ENCODE measurements at regions of chr1 and their contacts with region 1.

Region 1: GRCh38 chr1:153566440-153567379 is 1.1 kb upstream of the S100A2 start:
- DNase-seq: peak; percentile 65
- ATAC-seq: peak; percentile 72
- H3K4me3 Mint-ChIP-seq: no peak overlapping the region
- H3K27ac Mint-ChIP-seq: peak overlapping the region; percentile 85
- H3K4me1 Mint-ChIP-seq: peaks cover 33% of the 10 kb centered on the region
- H3K27me3 Mint-ChIP-seq: no peaks in the 10 kb centered on the region
- CTCF ChIP-seq: no peak

Region 2: GRCh38 chr1:153545067-153546055 is 21.3 kb before region 1 on chr1 and contains the start of gene S100A4:
- CTCF ChIA-PET with region 1: interaction called, 188 read pairs
- POLR2A ChIA-PET with region 1: interaction called, 3 read pairs
- DNase-seq: peak; percentile 88
- ATAC-seq: peak; percentile 89
- H3K4me3 Mint-ChIP-seq: peak within 1 kb of the TSS; percentile 64
- H3K27ac Mint-ChIP-seq: peak within 1 kb of the TSS; percentile 96
- H3K4me1 Mint-ChIP-seq: peaks cover 65% of the 10 kb centered on the region
- H3K27me3 Mint-ChIP-seq: no peaks in the 10 kb centered on the region; the same call in 1 of the 2 replicates
- CTCF ChIP-seq: no peak
- total RNA-seq, gene S100A4: 22.7 to 32.0 TPM (median 31.7 TPM) in 3 replicates

Region 3: DNA sequence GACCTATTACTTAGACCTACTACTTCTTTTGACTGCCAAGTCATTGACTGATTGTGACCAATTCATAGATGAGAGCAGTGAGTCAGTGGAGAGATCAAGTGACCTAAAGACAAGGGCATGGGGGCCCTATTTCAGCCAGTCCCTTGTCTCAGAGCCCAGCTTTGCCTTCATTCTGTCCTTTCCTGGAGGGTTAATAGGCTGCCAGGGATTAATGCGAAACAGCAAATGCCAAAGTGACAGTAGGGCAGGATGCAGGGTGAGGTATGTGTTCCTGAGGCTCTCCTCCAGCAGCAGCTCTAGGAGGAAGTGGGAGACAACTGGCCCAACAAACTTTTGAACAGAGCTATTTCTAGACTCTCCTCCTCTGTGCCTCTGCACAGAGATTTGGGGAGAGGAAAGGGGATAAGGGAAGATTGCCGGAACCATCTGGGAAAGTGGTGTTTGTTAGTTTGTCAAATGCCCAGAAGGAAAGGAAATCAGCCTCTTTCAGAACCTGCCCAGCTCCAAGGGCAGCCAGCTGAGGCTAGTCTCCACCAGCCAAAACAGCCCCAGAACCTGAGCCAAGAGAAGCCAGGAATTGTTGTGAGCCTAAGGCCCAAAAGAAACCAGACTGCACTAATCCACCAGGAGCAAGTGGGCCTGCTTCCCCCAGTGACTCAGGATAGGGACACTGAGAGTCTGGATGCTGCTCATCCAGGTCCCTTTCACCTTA is 12.7 kb before region 1 on chr1:
- CTCF ChIA-PET with region 1: interaction called, 18 read pairs
- POLR2A ChIA-PET with region 1: interaction called, 3 read pairs
- DNase-seq: no peak
- ATAC-seq: no peak
- H3K4me3 Mint-ChIP-seq: no peak overlapping the region
- H3K27ac Mint-ChIP-seq: no peak overlapping the region
- H3K4me1 Mint-ChIP-seq: peaks cover 20% of the 10 kb centered on the region
- H3K27me3 Mint-ChIP-seq: no peaks in the 10 kb centered on the region; the same call in 1 of the 2 replicates
- CTCF ChIP-seq: no peak